Lower leg skin (tissue), 4 donors: ENCODE measurements at regions of chr16 and their contacts with region 1.

Region 1: GRCh38 chr16:27618606-27619327 is 68.8 kb downstream of the KATNIP start:
- DNase-seq: no peak
- H3K4me3 ChIP-seq: no peak overlapping the region
- CTCF ChIP-seq: no peak
- POLR2A ChIP-seq: no peak

Region 2: DNA sequence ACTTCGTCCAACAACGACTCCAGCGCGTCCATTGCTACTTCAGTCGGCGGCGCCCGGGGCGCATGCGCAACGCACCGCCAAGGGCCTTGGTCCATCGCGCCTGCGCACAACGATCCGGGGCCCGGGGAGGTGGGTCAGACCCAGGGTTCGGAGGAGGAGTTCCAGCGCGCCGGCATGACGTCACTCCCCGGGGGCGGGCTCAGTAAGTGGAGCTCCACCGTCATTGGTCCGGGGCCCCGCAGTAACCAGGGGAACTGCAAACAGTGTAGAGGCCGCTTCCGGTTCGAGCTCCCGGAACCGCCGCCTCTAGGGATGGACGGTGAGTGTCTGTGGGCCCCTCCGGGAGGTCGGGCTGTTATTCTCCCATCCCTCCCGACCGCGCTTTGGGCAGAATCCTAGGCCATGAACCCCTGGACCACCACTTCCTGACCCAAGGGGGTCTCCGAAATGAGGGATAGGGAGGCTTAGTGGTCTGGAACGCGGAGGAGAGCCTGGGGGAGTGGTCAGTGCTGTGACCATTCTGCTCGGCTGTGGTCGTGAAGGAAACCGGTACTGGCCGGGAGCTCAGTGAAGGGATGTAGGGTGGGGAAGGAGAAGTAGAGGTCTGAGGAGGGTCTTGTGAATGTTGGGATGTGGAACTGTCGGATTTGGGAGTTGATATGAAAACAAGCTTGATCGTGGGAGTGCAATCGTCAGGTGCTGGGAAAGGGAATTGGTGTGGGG is 68.7 kb before region 1 on chr16 and contains the starts of genes GTF3C1 and KATNIP:
- intact Hi-C with region 1: loop called (anchors 2 kb)
- DNase-seq: peak; percentile 100
- H3K4me3 ChIP-seq: peak within 1 kb of the TSS; percentile 92
- CTCF ChIP-seq: no peak
- POLR2A ChIP-seq: no peak
- total RNA-seq, gene GTF3C1: 118 to 257 (median 156) TPM
- total RNA-seq, gene KATNIP: 18.5 to 33.6 (median 25.1) TPM

Region 3: GRCh38 chr16:27729516-27730304 is 110.9 kb after region 1 on chr16:
- intact Hi-C with region 1: no loop called
- DNase-seq: peak in 1 of 2 donors; percentile 44
- H3K4me3 ChIP-seq: no peak overlapping the region
- CTCF ChIP-seq: no peak
- POLR2A ChIP-seq: no peak